ENCODE measurements at regions of chr3 and their contacts with region 1.

Region 1: DNA sequence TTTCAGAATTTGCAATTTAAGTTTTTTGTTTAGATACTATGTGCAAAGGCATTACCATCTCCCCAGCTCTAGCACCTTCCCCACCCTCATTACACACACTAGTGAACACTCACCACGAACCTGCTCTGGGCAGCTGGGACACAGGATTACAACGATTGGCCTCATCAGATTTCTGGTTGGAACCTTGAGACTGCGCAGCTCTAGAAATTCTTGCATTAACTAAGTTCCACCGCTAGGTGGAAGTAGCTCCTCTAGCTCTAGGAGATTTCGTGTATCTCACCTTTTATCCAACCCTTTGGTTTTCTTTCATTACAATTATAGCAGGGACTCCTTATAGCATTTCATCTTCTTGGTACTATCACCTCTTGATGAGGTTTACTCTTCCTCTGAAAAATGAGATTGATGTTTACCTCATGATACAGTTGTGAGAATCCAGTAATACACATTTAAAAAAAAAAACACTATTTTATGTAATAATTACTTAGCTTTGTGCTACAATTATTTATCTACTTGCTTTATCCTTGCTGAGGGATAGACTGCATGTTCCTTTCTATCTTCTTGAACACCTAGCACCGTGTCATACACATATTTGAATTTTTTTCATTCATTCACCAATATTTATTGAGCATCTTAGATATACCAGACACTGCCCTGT is 28.7 kb upstream of the PLOD2 start:
- DNase-seq: peak in 1 of 2 experiments; percentile 48
- H3K4me3 ChIP-seq: no peak overlapping the region
- H3K27ac ChIP-seq: no peak overlapping the region
- H3K4me1 ChIP-seq: peaks cover 0 to 2% (median 0%) of the 10 kb centered on the region in 4 experiments; a peak in 1 of 7 replicates
- H3K27me3 ChIP-seq: no peaks in the 10 kb centered on the region
- CTCF ChIP-seq: peak in 2 of 3 experiments; percentile 75 to 79; a peak in 3 of 4 replicates
- EP300 ChIP-seq: no peak
- POLR2A ChIP-seq: no peak
- RAD21 ChIP-seq: peak; percentile 84 to 89

Region 2: GRCh38 chr3:146065573-146066006 is 124.1 kb before region 1 on chr3:
- CTCF ChIA-PET with region 1: interaction called, 88 read pairs
- POLR2A ChIA-PET with region 1: no interaction called
- DNase-seq: no peak
- H3K4me3 ChIP-seq: no peak overlapping the region
- H3K27ac ChIP-seq: no peak overlapping the region
- H3K4me1 ChIP-seq: no peaks in the 10 kb centered on the region
- H3K27me3 ChIP-seq: no peaks in the 10 kb centered on the region
- CTCF ChIP-seq: peak in 2 of 3 experiments; percentile 23 to 44; a peak in 2 of 4 replicates
- EP300 ChIP-seq: no peak
- POLR2A ChIP-seq: no peak
- RAD21 ChIP-seq: peak; percentile 63 to 74

Region 3: GRCh38 chr3:146160964-146161662 is 28.5 kb before region 1 on chr3 and contains the start of gene PLOD2:
- CTCF ChIA-PET with region 1: interaction called, 15 read pairs
- POLR2A ChIA-PET with region 1: interaction called, 8 read pairs
- DNase-seq: peak; percentile 36 to 77
- H3K4me3 ChIP-seq: peak within 1 kb of the TSS; percentile 69 to 89 (median 73)
- H3K27ac ChIP-seq: peak within 1 kb of the TSS; percentile 58; the same call in 1 of the 2 replicates
- H3K4me1 ChIP-seq: peaks cover 0 to 7% (median 3%) of the 10 kb centered on the region in 4 experiments; a peak in 3 of 7 replicates
- H3K27me3 ChIP-seq: peaks cover 0 to 6% (median 1%) of the 10 kb centered on the region in 4 experiments; a peak in 3 of 7 replicates
- CTCF ChIP-seq: no peak
- EP300 ChIP-seq: no peak; a peak in 1 of 3 replicates
- POLR2A ChIP-seq: peak; percentile 46 to 86
- RAD21 ChIP-seq: no peak
- total RNA-seq, gene PLOD2: 25.7 and 28.7 TPM in 2 replicates

Region 4: DNA sequence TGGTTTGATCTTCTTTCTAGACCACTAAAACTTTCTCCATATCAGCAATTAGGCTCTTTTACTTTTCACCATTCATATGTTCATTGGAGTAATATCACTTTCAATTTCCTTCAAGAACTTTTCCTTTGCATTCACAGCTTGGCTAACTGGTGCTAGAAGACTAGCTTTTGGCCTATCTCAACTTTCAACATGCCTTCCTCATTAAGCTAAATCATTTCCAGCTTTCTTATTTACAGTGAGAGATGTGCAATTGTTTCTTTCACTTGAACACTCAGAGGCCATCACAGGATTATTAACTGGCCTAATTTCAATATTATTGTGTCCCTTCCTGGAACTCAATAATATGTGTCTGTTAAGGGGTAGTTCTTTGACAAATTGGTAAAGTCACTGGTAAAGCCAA is 14.1 kb after region 1 on chr3:
- CTCF ChIA-PET with region 1: interaction called, 12 read pairs
- POLR2A ChIA-PET with region 1: no interaction called
- DNase-seq: no peak
- H3K4me3 ChIP-seq: no peak overlapping the region
- H3K27ac ChIP-seq: no peak overlapping the region
- H3K4me1 ChIP-seq: no peaks in the 10 kb centered on the region
- H3K27me3 ChIP-seq: no peaks in the 10 kb centered on the region
- CTCF ChIP-seq: no peak
- EP300 ChIP-seq: no peak
- POLR2A ChIP-seq: no peak
- RAD21 ChIP-seq: no peak

Region 5: GRCh38 chr3:146326670-146327543 is 137.3 kb after region 1 on chr3:
- CTCF ChIA-PET with region 1: interaction called, 42 read pairs
- POLR2A ChIA-PET with region 1: no interaction called
- DNase-seq: no peak
- H3K4me3 ChIP-seq: no peak overlapping the region
- H3K27ac ChIP-seq: no peak overlapping the region
- H3K4me1 ChIP-seq: no peaks in the 10 kb centered on the region
- H3K27me3 ChIP-seq: no peaks in the 10 kb centered on the region
- CTCF ChIP-seq: peak in 2 of 3 experiments; percentile 20 to 44; a peak in 2 of 4 replicates
- EP300 ChIP-seq: no peak
- POLR2A ChIP-seq: no peak
- RAD21 ChIP-seq: peak; percentile 73 to 80

Region 6: GRCh38 chr3:146382386-146382785 is 192.7 kb after region 1 on chr3:
- CTCF ChIA-PET with region 1: interaction called, 29 read pairs
- POLR2A ChIA-PET with region 1: no interaction called
- DNase-seq: no peak
- H3K4me3 ChIP-seq: no peak overlapping the region
- H3K27ac ChIP-seq: no peak overlapping the region
- H3K4me1 ChIP-seq: no peaks in the 10 kb centered on the region
- H3K27me3 ChIP-seq: no peaks in the 10 kb centered on the region
- CTCF ChIP-seq: peak; percentile 40 to 52 (median 47)
- EP300 ChIP-seq: no peak
- POLR2A ChIP-seq: no peak
- RAD21 ChIP-seq: peak; percentile 71 to 77

Region 7: GRCh38 chr3:146589899-146590508 is 400.4 kb after region 1 on chr3:
- CTCF ChIA-PET with region 1: interaction called, 14 read pairs
- POLR2A ChIA-PET with region 1: no interaction called
- DNase-seq: no peak
- H3K4me3 ChIP-seq: no peak overlapping the region
- H3K27ac ChIP-seq: no peak overlapping the region
- H3K4me1 ChIP-seq: no peaks in the 10 kb centered on the region
- H3K27me3 ChIP-seq: no peaks in the 10 kb centered on the region
- CTCF ChIP-seq: peak in 2 of 3 experiments; percentile 28 to 45; a peak in 2 of 4 replicates
- EP300 ChIP-seq: no peak
- POLR2A ChIP-seq: no peak
- RAD21 ChIP-seq: peak; percentile 53 to 58

Measured in H1 (cell line).